H1 (cell line): ENCODE measurements at regions of chr17 and their contacts with region 1.

Region 1: DNA sequence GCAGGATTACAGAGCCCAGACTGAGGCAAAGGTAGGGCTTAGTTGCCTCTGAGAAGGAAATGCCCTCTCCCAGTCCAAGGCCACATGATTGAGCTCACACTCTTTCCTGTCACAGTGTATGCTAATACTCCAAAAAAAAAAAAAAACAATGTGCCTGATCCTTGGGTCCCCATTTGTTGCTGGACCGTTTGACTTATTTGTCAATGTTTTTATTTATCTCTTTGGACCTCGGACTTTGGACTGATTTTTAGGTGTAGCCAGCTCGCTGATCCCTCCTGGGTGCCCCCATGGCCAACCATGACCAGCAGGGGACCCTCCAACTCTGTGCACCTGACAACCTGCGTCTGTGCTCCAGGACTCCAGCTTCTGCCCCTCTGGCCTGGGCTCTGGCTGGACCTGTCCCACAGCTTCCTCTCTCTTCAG is 622 bp upstream of the CCL16 start:
- DNase-seq: no peak
- H3K4me3 ChIP-seq: no peak overlapping the region
- H3K27ac ChIP-seq: no peak overlapping the region
- H3K4me1 ChIP-seq: no peaks in the 10 kb centered on the region
- H3K27me3 ChIP-seq: no peaks in the 10 kb centered on the region
- CTCF ChIP-seq: peak; percentile 44 to 52 (median 48)
- EP300 ChIP-seq: no peak
- POLR2A ChIP-seq: no peak
- RAD21 ChIP-seq: peak; percentile 67 to 74

Region 2: GRCh38 chr17:35794988-35795824 is 186.7 kb before region 1 on chr17 and contains the start of gene MMP28:
- CTCF ChIA-PET with region 1: no interaction called
- POLR2A ChIA-PET with region 1: no interaction called
- DNase-seq: peak in 1 of 2 experiments; percentile 81
- H3K4me3 ChIP-seq: peak within 1 kb of the TSS; percentile 27 to 66 (median 60)
- H3K27ac ChIP-seq: no peak within 1 kb of the TSS
- H3K4me1 ChIP-seq: peaks cover 0 to 10% (median 5%) of the 10 kb centered on the region in 4 experiments; a peak in 5 of 7 replicates
- H3K27me3 ChIP-seq: peaks cover 23 to 54% (median 43%) of the 10 kb centered on the region in 4 experiments
- CTCF ChIP-seq: no peak
- EP300 ChIP-seq: no peak
- POLR2A ChIP-seq: no peak
- RAD21 ChIP-seq: no peak
- total RNA-seq, gene MMP28: not detected in 2 replicates

Region 3: GRCh38 chr17:35969558-35970380 is 12.2 kb before region 1 on chr17:
- CTCF ChIA-PET with region 1: interaction called, 11 read pairs
- POLR2A ChIA-PET with region 1: interaction called, 4 read pairs
- DNase-seq: peak; percentile 60 to 87
- H3K4me3 ChIP-seq: no peak overlapping the region
- H3K27ac ChIP-seq: no peak overlapping the region
- H3K4me1 ChIP-seq: peaks cover 0 to 2% (median 0%) of the 10 kb centered on the region in 4 experiments; a peak in 2 of 7 replicates
- H3K27me3 ChIP-seq: no peaks in the 10 kb centered on the region
- CTCF ChIP-seq: peak; percentile 15 to 88 (median 81)
- EP300 ChIP-seq: no peak
- POLR2A ChIP-seq: no peak
- RAD21 ChIP-seq: peak; percentile 95

Region 4: DNA sequence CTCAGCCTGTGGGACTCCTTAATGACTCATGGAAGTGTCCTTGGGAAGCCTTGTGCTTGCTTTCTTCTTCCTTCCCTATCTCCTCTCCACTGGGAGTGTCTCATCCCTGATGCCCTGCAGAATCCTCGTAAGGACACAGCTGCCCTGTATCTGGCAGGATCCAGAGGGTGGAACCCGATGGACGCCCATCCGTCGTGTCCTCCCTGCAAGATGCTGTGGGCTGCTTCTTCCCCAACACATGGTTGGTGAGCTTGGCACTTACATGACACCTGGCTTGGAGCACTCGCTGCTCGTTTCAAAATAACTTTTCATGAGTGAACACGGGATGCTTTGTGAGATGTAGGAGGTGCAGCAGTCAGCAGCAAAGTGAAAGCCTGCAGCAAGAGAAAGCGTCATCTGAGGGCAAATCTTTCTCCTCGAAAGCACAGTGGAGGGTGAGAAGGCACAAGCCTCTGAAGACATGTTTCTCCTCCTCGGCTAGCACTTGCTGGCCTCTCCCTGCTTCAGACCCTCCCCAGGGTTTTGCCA is 16.2 kb after region 1 on chr17:
- CTCF ChIA-PET with region 1: no interaction called
- POLR2A ChIA-PET with region 1: no interaction called
- DNase-seq: no peak
- H3K4me3 ChIP-seq: no peak overlapping the region
- H3K27ac ChIP-seq: no peak overlapping the region
- H3K4me1 ChIP-seq: 0 out of 7 replicates have a peak, but pooled peaks cover 0 to 2% (median 0%) of the 10 kb centered on the region in 4 experiments
- H3K27me3 ChIP-seq: no peaks in the 10 kb centered on the region
- CTCF ChIP-seq: no peak
- EP300 ChIP-seq: no peak
- POLR2A ChIP-seq: no peak
- RAD21 ChIP-seq: no peak

Region 5: GRCh38 chr17:36034127-36034526 is 52.2 kb after region 1 on chr17:
- CTCF ChIA-PET with region 1: no interaction called
- POLR2A ChIA-PET with region 1: no interaction called
- DNase-seq: no peak
- H3K4me3 ChIP-seq: no peak overlapping the region
- H3K27ac ChIP-seq: no peak overlapping the region
- H3K4me1 ChIP-seq: no peaks in the 10 kb centered on the region
- H3K27me3 ChIP-seq: peaks cover 0 to 2% (median under 1%) of the 10 kb centered on the region in 4 experiments; a peak in 1 of 7 replicates
- CTCF ChIP-seq: no peak
- EP300 ChIP-seq: no peak
- POLR2A ChIP-seq: no peak
- RAD21 ChIP-seq: no peak

Region 6: GRCh38 chr17:36057911-36058310 is 76.0 kb after region 1 on chr17:
- CTCF ChIA-PET with region 1: no interaction called
- POLR2A ChIA-PET with region 1: no interaction called
- DNase-seq: no peak
- H3K4me3 ChIP-seq: no peak overlapping the region
- H3K27ac ChIP-seq: no peak overlapping the region
- H3K4me1 ChIP-seq: no peaks in the 10 kb centered on the region
- H3K27me3 ChIP-seq: no peaks in the 10 kb centered on the region; a peak in 1 of 7 replicates
- CTCF ChIP-seq: no peak
- EP300 ChIP-seq: no peak
- POLR2A ChIP-seq: no peak
- RAD21 ChIP-seq: no peak

Region 7: DNA sequence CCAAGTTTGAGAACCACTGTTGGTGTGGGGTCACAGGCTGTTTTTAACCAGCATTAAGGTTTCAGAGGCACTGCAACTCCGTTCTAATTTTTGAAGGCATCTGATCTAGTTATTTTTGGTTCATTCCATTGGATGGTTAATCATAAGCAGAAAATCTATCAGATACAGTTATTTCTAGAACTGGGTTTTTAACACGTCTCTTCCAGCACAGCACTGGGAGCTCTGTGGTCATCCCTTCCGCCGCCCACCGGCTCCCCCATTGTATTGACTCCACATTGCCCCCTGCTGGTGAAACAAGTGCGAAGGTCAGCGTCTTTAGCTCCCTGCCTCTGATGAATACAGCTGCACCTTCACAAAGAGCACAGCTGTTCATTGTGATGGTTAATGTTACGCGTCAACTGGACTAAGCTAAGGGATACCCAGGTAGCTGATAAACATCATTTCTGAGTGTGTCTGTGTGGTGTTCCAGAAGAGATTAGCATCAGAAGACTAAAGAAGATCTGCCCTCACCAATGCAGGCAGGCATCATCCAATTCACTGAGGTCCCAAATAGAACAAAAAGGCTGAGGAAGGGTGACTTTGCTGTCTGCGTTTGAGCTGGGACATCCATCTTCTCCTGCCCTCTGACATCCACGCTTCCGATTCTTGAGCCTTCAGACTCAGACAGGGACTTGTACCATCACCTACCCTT is 90.7 kb after region 1 on chr17:
- CTCF ChIA-PET with region 1: interaction called, 33 read pairs
- POLR2A ChIA-PET with region 1: no interaction called
- DNase-seq: peak; percentile 27 to 88
- H3K4me3 ChIP-seq: no peak overlapping the region
- H3K27ac ChIP-seq: no peak overlapping the region
- H3K4me1 ChIP-seq: no peaks in the 10 kb centered on the region
- H3K27me3 ChIP-seq: no peaks in the 10 kb centered on the region
- CTCF ChIP-seq: peak; percentile 72 to 81 (median 79)
- EP300 ChIP-seq: no peak
- POLR2A ChIP-seq: no peak
- RAD21 ChIP-seq: peak; percentile 65 to 70